ENCODE measurements at regions of chr19 and their contacts with region 1.

Region 1: DNA sequence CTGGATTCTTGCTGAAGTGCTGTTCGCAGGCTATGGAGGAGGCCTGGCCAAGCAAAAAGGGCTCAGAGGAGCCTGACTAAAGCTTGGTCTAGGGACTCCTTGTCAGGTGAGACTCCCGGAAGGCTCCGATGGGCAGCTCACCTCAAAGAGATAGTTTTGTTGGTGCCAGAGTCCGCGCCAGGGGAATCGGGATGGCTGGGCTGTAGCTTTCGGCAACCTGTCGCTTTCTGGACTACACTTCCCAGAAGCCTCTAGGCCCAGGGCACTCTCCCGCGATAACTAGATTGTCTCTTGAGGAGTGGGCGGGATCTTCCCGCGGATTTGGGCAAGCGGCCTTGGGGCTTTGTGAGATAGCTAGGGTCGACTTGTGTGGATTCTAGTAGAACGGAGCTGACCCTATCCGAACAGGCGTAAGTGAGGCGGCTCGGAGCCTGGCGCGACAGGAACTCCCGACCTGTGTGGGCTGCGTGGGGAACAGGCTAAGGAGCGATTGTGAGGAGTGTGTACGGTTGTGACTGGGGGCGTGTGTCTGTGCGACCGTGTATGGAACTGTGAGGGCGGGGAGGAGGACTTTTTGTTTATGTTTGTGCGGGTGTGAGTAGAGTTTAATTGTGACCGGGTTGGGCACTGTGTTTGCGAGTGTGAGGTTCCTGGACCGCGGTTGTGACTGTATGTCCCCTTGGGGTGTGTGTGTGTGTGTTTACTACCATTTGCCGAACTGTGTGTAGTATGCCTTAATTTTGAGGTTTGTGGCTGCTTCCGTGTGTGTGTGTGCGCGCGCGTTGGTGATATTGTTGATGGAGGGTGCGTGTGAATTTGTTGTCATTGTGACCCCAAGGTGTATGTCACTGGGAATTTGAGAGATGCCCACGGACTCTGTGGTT is at the start of gene ZNF345:
- DNase-seq: peak; percentile 96
- H3K4me3 Mint-ChIP-seq: no peak within 1 kb of the TSS
- H3K27ac Mint-ChIP-seq: no peak within 1 kb of the TSS
- H3K4me1 Mint-ChIP-seq: peaks cover 2% of the 10 kb centered on the region
- H3K27me3 Mint-ChIP-seq: no peaks in the 10 kb centered on the region
- total RNA-seq, gene ZNF345: 2.8 and 4.2 TPM in 2 replicates

Region 2: GRCh38 chr19:36378625-36379509 is 471.9 kb before region 1 on chr19 and contains the start of gene ZFP14:
- intact Hi-C with region 1: loop called (anchors 1 kb)
- DNase-seq: peak; percentile 98
- H3K4me3 Mint-ChIP-seq: peak within 1 kb of the TSS; percentile 84
- H3K27ac Mint-ChIP-seq: peak within 1 kb of the TSS; percentile 90
- H3K4me1 Mint-ChIP-seq: peaks cover 14% of the 10 kb centered on the region
- H3K27me3 Mint-ChIP-seq: no peaks in the 10 kb centered on the region
- total RNA-seq, gene ZFP14: 2.2 and 3.2 TPM in 2 replicates

Region 3: GRCh38 chr19:36573020-36573885 is 277.5 kb before region 1 on chr19 and contains the start of gene ZNF529:
- intact Hi-C with region 1: loop called (anchors 2 kb)
- DNase-seq: peak; percentile 97
- H3K4me3 Mint-ChIP-seq: peak within 1 kb of the TSS; percentile 89
- H3K27ac Mint-ChIP-seq: peak within 1 kb of the TSS; percentile 95
- H3K4me1 Mint-ChIP-seq: peaks cover 24% of the 10 kb centered on the region
- H3K27me3 Mint-ChIP-seq: no peaks in the 10 kb centered on the region
- total RNA-seq, gene ZNF529: 16.8 and 17.6 TPM in 2 replicates

Region 4: DNA sequence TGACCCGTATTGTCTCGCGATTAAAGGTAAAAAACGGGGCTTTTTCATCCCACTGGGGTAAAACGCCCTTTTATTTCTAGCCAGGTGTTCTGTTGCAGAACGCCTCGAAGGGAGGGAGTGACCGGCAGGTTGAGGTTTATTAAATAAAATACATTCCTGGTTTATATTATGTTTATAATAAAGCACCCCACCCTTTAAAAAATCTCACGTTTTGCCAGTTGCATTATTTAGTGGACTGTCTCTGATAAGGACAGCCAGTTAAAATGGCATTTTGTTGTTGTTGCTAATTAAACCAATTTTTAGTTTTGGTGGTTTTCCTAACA is 53.1 kb before region 1 on chr19:
- intact Hi-C with region 1: loop called (anchors 1 kb)
- DNase-seq: no peak
- H3K4me3 Mint-ChIP-seq: peak overlapping the region; percentile 88
- H3K27ac Mint-ChIP-seq: peak overlapping the region; percentile 91
- H3K4me1 Mint-ChIP-seq: peaks cover 3% of the 10 kb centered on the region
- H3K27me3 Mint-ChIP-seq: no peaks in the 10 kb centered on the region

Region 5: GRCh38 chr19:36915992-36916830 is 65.4 kb after region 1 on chr19 and contains the starts of genes ZNF568 and ZNF829:
- intact Hi-C with region 1: loop called (anchors 1 kb)
- DNase-seq: peak; percentile 97
- H3K4me3 Mint-ChIP-seq: peak within 1 kb of the TSS; percentile 90
- H3K27ac Mint-ChIP-seq: peak within 1 kb of the TSS; percentile 96
- H3K4me1 Mint-ChIP-seq: peaks cover 19% of the 10 kb centered on the region
- H3K27me3 Mint-ChIP-seq: no peaks in the 10 kb centered on the region
- total RNA-seq, gene ZNF568: 4.4 and 6.1 TPM in 2 replicates
- total RNA-seq, gene ZNF829: 4.8 TPM in 2 replicates

Measured in activated CD4-positive, alpha-beta T cell treated with anti-CD3 and anti-CD28 coated beads, Interleukin-2, amount 10 ng/mL, durations not matched to agents 24 days and 14 days (primary cell).